ENCODE measurements at regions of chr16 and their contacts with region 1.

Region 1: GRCh38 chr16:66483689-66484481 is 56.8 kb downstream of the BEAN1 start:
- DNase-seq: peak; percentile 96
- H3K4me3 ChIP-seq: no peak overlapping the region
- H3K27ac ChIP-seq: no peak overlapping the region
- H3K4me1 ChIP-seq: peaks cover 7 to 60% (median 25%) of the 10 kb centered on the region in 6 donors
- H3K27me3 ChIP-seq: no peaks in the 10 kb centered on the region
- CTCF ChIP-seq: peak; percentile 81 to 95 (median 93)
- POLR2A ChIP-seq: no peak

Region 2: DNA sequence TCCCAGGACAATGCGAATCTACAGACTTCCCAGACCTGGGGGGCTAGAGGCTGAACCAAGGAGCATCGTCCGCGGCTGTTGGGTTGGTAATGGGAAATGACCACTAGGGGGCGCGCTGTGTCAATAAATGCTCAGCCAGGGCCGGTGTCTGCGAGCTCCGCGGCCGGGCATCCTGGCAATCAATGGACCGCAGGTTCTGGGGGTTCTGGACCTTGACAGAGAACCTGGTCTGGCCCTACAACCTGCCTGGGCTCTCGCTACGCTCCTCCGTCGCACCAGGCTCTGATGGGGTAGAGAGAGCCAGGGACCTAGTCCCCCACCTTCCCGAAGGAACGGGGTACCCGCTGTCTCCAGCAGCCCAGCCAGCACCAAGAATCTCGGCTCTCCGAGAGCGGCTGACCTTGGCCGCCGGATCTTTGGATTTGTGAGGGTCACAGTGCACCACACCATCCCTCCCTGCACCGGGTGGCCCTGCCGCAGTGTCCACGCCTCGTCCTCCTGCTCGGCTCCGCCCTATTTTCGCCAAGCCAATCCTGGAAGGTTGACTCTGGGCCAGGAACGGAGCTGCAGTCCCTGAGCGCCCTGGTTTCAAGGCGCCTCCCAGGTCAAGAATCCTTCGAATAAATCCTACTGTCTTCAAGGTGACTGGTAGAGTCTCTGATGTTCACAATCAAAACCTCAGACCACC is 77.2 kb before region 1 on chr16:
- intact Hi-C with region 1: loop called (anchors 2 kb)
- DNase-seq: peak; percentile 96
- H3K4me3 ChIP-seq: peak overlapping the region; percentile 24 to 74 (median 42)
- H3K27ac ChIP-seq: peak overlapping the region in 5 of 8 donors; percentile 44 to 80 (median 65)
- H3K4me1 ChIP-seq: peaks cover 7 to 37% (median 33%) of the 10 kb centered on the region in 6 donors
- H3K27me3 ChIP-seq: peaks cover 0 to 20% (median 0%) of the 10 kb centered on the region in 7 donors
- CTCF ChIP-seq: peak; percentile 76 to 94 (median 90)
- POLR2A ChIP-seq: no peak

Region 3: DNA sequence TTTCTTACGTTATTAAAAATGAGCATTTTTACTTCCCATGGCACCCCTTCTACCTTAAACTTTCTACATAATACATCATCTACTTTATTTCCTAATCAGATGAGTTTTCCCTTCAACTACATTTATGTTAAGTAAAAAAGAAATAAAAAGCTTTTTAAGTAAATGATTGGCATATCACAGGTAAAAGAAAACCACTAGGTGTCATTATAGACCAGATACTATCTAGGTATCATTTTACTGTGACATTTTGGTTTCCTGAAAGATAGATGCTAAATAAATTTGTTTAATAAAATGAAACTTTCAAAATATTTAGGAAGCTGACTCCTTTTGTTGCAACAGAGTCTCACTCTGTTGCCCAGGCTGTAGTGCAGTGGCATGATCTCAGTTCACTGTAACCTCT is 78.5 kb after region 1 on chr16:
- intact Hi-C with region 1: loop called (anchors 5 kb)
- DNase-seq: no peak
- H3K4me3 ChIP-seq: no peak overlapping the region
- H3K27ac ChIP-seq: peak overlapping the region in 3 of 8 donors; percentile 21 to 59 (median 22)
- H3K4me1 ChIP-seq: peaks cover 5 to 83% (median 47%) of the 10 kb centered on the region in 6 donors
- H3K27me3 ChIP-seq: no peaks in the 10 kb centered on the region
- CTCF ChIP-seq: peak in 4 of 11 experiments; percentile 21 to 38 (median 28)
- POLR2A ChIP-seq: no peak

Region 4: GRCh38 chr16:66590322-66590721 is 106.4 kb after region 1 on chr16:
- intact Hi-C with region 1: loop called (anchors 10 kb)
- DNase-seq: no peak
- H3K4me3 ChIP-seq: peak overlapping the region in 4 of 8 donors; percentile 7 to 40 (median 18)
- H3K27ac ChIP-seq: peak overlapping the region in 3 of 8 donors; percentile 47 to 86 (median 75)
- H3K4me1 ChIP-seq: peaks cover 0 to 69% (median 45%) of the 10 kb centered on the region in 6 donors
- H3K27me3 ChIP-seq: no peaks in the 10 kb centered on the region
- CTCF ChIP-seq: peak in 2 of 11 experiments; percentile 9 to 20
- POLR2A ChIP-seq: no peak

Measured in spleen (tissue), 13 donors.